K562 (cell line): ENCODE measurements at regions of chr12 and their contacts with region 1.

Region 1: GRCh38 chr12:117836999-117837736 is 131.6 kb downstream of the KSR2 start:
- DNase-seq: peak; percentile 65 to 78 (median 77)
- ATAC-seq: peak; percentile 91
- H3K4me3 ChIP-seq: no peak overlapping the region
- H3K27ac ChIP-seq: no peak overlapping the region
- H3K4me1 ChIP-seq: no peaks in the 10 kb centered on the region
- H3K27me3 ChIP-seq: peaks cover 0 to 21% of the 10 kb centered on the region in 2 experiments; a peak in 2 of 5 replicates
- CTCF ChIP-seq: peak; percentile 89 to 98 (median 95)
- EP300 ChIP-seq: no peak
- POLR2A ChIP-seq: no peak
- RAD21 ChIP-seq: peak; percentile 76 to 93

Region 2: DNA sequence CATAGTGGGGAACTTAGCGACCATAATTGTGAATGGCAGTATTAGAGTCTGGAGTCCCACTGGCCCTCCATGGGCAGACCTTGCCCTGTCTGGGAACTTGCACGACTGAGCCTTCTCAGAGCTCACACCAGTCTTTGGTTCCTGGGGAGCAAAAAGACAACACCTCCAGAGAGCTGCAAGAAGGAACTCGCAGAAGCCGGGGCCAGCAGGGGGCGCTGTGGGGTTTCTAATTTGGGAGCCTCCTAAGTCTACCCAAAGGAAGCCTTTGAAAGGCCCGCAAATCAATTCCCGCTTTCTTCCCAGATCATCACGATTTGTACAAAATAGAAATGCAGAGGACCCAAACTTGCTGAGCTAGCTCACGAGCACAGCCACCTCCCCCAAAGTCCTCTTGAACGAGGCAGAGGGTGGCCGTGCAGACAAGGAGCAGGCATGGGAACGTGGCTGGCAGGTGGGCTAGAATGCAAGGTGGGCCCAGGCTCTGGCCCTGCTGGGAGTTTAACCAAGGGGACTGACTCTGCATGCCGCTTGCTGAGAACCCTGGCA is 600.6 kb before region 1 on chr12:
- CTCF ChIA-PET with region 1: interaction called, 4 read pairs
- POLR2A ChIA-PET with region 1: interaction called, 4 read pairs
- in situ Hi-C with region 1: no loop called
- intact Hi-C with region 1: loop called (anchors 5 kb)
- DNase-seq: peak; percentile 65 to 82 (median 75)
- ATAC-seq: peak; percentile 95
- H3K4me3 ChIP-seq: no peak overlapping the region
- H3K27ac ChIP-seq: no peak overlapping the region
- H3K4me1 ChIP-seq: 0 out of 5 replicates have a peak, but pooled peaks cover 0 to 3% of the 10 kb centered on the region in 2 experiments
- H3K27me3 ChIP-seq: peaks cover 10 to 27% of the 10 kb centered on the region in 2 experiments; a peak in 3 of 5 replicates
- CTCF ChIP-seq: peak; percentile 72 to 85 (median 85)
- EP300 ChIP-seq: no peak
- POLR2A ChIP-seq: no peak
- RAD21 ChIP-seq: peak; percentile 30 to 65; a peak in 3 of 4 replicates

Region 3: GRCh38 chr12:117421068-117421752 is 416.0 kb before region 1 on chr12:
- CTCF ChIA-PET with region 1: no interaction called
- POLR2A ChIA-PET with region 1: no interaction called
- in situ Hi-C with region 1: no loop called
- intact Hi-C with region 1: no loop called
- DNase-seq: no peak
- ATAC-seq: no peak
- H3K4me3 ChIP-seq: no peak overlapping the region
- H3K27ac ChIP-seq: no peak overlapping the region
- H3K4me1 ChIP-seq: no peaks in the 10 kb centered on the region
- H3K27me3 ChIP-seq: no peaks in the 10 kb centered on the region; a peak in 1 of 5 replicates
- CTCF ChIP-seq: no peak
- EP300 ChIP-seq: no peak
- POLR2A ChIP-seq: no peak
- RAD21 ChIP-seq: no peak

Region 4: DNA sequence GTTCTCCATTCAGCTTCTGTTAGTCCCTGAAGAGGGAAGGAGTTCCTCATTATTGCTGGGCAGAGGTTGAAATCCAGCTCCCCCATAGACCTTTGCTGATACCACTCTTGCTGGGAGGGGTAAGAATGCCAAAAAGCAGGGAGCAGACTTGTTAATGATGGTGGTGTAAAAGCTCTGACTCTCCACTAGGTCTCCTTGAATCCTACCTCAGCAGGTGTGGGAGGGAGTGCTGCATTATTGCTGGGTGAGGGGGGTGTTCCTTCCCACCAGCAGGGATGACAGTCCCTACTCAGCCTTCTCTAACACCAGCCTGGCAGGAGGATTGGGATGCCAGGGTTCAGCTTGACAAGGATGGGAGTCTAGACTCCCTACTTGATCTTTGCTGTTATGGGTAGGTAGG is 290.0 kb before region 1 on chr12:
- CTCF ChIA-PET with region 1: no interaction called
- POLR2A ChIA-PET with region 1: no interaction called
- in situ Hi-C with region 1: no loop called
- intact Hi-C with region 1: no loop called
- DNase-seq: no peak
- ATAC-seq: no peak
- H3K4me3 ChIP-seq: no peak overlapping the region
- H3K27ac ChIP-seq: no peak overlapping the region
- H3K4me1 ChIP-seq: no peaks in the 10 kb centered on the region
- H3K27me3 ChIP-seq: no peaks in the 10 kb centered on the region
- CTCF ChIP-seq: no peak
- EP300 ChIP-seq: no peak
- POLR2A ChIP-seq: no peak
- RAD21 ChIP-seq: no peak

Region 5: DNA sequence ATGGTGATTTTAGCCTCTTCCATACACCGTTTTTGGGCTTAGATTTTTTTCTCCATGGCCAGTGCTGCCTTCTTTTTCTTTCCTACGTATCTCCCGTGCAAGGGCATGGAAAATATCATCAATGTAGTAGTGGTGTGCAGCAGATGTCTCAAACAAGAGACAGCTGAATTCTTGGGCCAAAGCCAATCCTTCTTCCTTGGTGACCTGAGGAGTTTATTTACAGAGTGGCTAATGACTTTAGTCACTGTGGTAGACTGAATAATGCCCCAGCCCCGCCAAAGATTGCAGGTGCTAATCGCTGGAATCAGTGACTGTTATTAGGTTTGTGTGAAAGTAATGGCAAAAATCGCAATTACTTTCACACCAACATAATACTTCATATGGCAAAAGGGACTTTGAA is 240.2 kb before region 1 on chr12:
- CTCF ChIA-PET with region 1: no interaction called
- POLR2A ChIA-PET with region 1: no interaction called
- in situ Hi-C with region 1: no loop called
- intact Hi-C with region 1: loop called (anchors 10 kb)
- DNase-seq: no peak
- ATAC-seq: no peak
- H3K4me3 ChIP-seq: no peak overlapping the region
- H3K27ac ChIP-seq: no peak overlapping the region
- H3K4me1 ChIP-seq: no peaks in the 10 kb centered on the region
- H3K27me3 ChIP-seq: peaks cover 0 to 11% of the 10 kb centered on the region in 2 experiments; a peak in 2 of 5 replicates
- CTCF ChIP-seq: no peak
- EP300 ChIP-seq: no peak
- POLR2A ChIP-seq: no peak
- RAD21 ChIP-seq: no peak

Region 6: GRCh38 chr12:117850048-117850447 is 12.9 kb after region 1 on chr12:
- CTCF ChIA-PET with region 1: no interaction called
- POLR2A ChIA-PET with region 1: no interaction called
- in situ Hi-C with region 1: no loop called
- intact Hi-C with region 1: no loop called
- DNase-seq: peak; percentile 62 to 83 (median 72)
- ATAC-seq: peak; percentile 92
- H3K4me3 ChIP-seq: no peak overlapping the region
- H3K27ac ChIP-seq: no peak overlapping the region
- H3K4me1 ChIP-seq: no peaks in the 10 kb centered on the region; a peak in 1 of 5 replicates
- H3K27me3 ChIP-seq: peaks cover 0 to 8% of the 10 kb centered on the region in 2 experiments; a peak in 1 of 5 replicates
- CTCF ChIP-seq: peak; percentile 83 to 86 (median 86)
- EP300 ChIP-seq: no peak
- POLR2A ChIP-seq: no peak
- RAD21 ChIP-seq: peak; percentile 12 to 62; a peak in 2 of 4 replicates